ENCODE measurements at regions of chr18 and their contacts with region 1.

Region 1: GRCh38 chr18:62425465-62426195 is 97.2 kb upstream of the ZCCHC2 start:
- DNase-seq: peak; percentile 73 to 77
- H3K4me3 ChIP-seq: peak overlapping the region; percentile 20 to 55 (median 33); a peak in 5 of 8 replicates
- H3K27ac ChIP-seq: no peak overlapping the region
- H3K4me1 ChIP-seq: peaks cover 0 to 8% (median 5%) of the 10 kb centered on the region in 4 experiments; a peak in 5 of 7 replicates
- H3K27me3 ChIP-seq: no peaks in the 10 kb centered on the region
- CTCF ChIP-seq: peak; percentile 29 to 89 (median 88)
- EP300 ChIP-seq: no peak
- POLR2A ChIP-seq: no peak
- RAD21 ChIP-seq: peak; percentile 78 to 85

Region 2: DNA sequence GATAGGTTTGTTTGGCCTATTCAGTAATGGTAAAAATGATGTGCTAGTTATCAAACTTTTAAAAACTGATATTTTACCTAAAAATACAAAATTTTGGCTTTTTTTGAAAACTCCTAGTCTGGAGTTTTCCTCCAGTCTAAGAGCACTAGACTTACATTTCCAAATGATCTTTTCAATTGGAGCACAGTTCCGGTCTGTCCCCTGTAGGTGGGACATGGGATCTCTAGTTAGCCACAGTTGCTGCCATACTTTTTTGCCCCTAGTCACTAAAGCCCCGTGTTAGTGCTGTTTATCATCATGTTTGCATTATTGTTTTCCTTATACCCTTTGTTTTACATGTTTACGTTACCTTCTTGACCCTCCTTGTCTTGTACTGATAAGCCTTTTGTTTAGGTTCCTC is 186.2 kb before region 1 on chr18:
- CTCF ChIA-PET with region 1: no interaction called
- POLR2A ChIA-PET with region 1: no interaction called
- DNase-seq: no peak
- H3K4me3 ChIP-seq: no peak overlapping the region
- H3K27ac ChIP-seq: no peak overlapping the region
- H3K4me1 ChIP-seq: no peaks in the 10 kb centered on the region
- H3K27me3 ChIP-seq: no peaks in the 10 kb centered on the region
- CTCF ChIP-seq: peak in 2 of 3 experiments; percentile 9 to 36; a peak in 1 of 4 replicates
- EP300 ChIP-seq: no peak
- POLR2A ChIP-seq: no peak
- RAD21 ChIP-seq: no peak

Region 3: GRCh38 chr18:62399781-62400308 is 25.8 kb before region 1 on chr18:
- CTCF ChIA-PET with region 1: interaction called, 11 read pairs
- POLR2A ChIA-PET with region 1: no interaction called
- DNase-seq: no peak
- H3K4me3 ChIP-seq: no peak overlapping the region
- H3K27ac ChIP-seq: no peak overlapping the region
- H3K4me1 ChIP-seq: peaks cover 3 to 6% (median 4%) of the 10 kb centered on the region in 4 experiments; a peak in 4 of 7 replicates
- H3K27me3 ChIP-seq: no peaks in the 10 kb centered on the region
- CTCF ChIP-seq: peak; percentile 43 to 67 (median 55)
- EP300 ChIP-seq: no peak
- POLR2A ChIP-seq: no peak
- RAD21 ChIP-seq: peak; percentile 41 to 57; a peak in 3 of 4 replicates

Region 4: DNA sequence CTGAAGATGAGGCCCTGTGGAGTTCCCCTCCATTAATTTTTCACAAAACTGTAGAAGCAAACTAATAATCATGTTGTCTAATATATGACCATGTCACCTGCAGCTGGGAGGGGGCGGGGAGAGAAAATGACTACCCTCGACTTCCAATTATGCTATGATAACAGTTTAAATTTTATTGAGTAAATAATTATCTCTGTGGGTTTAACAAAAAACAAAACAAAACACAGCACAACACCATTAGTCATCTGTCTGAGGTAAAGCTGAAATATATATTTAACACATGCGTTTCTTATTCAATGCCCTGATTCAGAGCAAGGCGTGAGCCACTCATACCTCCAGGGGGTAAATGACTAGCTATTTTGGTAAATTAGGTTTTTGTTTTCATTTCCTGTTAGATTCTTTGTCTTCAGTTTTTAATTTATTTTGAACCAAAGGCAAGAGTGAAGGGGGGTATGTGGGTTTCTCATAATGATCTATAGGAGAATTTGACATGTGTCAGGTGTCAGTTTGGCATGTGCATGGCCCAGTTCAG is 19.8 kb after region 1 on chr18:
- CTCF ChIA-PET with region 1: interaction called, 10 read pairs
- POLR2A ChIA-PET with region 1: interaction called, 4 read pairs
- DNase-seq: no peak
- H3K4me3 ChIP-seq: no peak overlapping the region
- H3K27ac ChIP-seq: no peak overlapping the region
- H3K4me1 ChIP-seq: peaks cover 0 to 3% (median 0%) of the 10 kb centered on the region in 4 experiments; a peak in 1 of 7 replicates
- H3K27me3 ChIP-seq: no peaks in the 10 kb centered on the region; a peak in 1 of 7 replicates
- CTCF ChIP-seq: no peak
- EP300 ChIP-seq: no peak
- POLR2A ChIP-seq: no peak
- RAD21 ChIP-seq: no peak

Region 5: DNA sequence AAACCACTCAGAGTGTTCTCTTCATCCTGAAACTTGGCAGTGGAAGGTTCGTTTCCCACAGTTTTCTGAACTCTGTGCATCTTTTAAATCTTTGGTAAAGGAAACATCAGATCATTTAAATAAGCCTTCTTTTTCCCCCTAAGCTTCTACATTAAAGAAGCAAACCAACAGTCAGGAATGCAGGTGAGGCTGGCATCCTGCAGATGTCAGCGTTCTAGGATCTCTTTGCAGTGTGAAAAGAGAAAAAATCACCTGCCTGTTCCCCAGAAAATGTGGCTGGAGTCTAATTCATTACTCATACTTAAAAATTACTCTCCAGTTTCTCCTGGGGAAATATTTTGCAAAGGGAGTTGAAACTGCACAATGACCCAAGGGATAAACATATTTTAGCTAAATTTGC is 32.7 kb after region 1 on chr18:
- CTCF ChIA-PET with region 1: interaction called, 10 read pairs
- POLR2A ChIA-PET with region 1: no interaction called
- DNase-seq: no peak
- H3K4me3 ChIP-seq: no peak overlapping the region
- H3K27ac ChIP-seq: no peak overlapping the region
- H3K4me1 ChIP-seq: peaks cover 0 to 3% (median 0%) of the 10 kb centered on the region in 4 experiments; a peak in 1 of 7 replicates
- H3K27me3 ChIP-seq: no peaks in the 10 kb centered on the region
- CTCF ChIP-seq: peak in 2 of 3 experiments; percentile 18 to 37; a peak in 2 of 4 replicates
- EP300 ChIP-seq: no peak
- POLR2A ChIP-seq: no peak
- RAD21 ChIP-seq: peak in 1 of 2 experiments; percentile 28; a peak in 1 of 4 replicates

Region 6: DNA sequence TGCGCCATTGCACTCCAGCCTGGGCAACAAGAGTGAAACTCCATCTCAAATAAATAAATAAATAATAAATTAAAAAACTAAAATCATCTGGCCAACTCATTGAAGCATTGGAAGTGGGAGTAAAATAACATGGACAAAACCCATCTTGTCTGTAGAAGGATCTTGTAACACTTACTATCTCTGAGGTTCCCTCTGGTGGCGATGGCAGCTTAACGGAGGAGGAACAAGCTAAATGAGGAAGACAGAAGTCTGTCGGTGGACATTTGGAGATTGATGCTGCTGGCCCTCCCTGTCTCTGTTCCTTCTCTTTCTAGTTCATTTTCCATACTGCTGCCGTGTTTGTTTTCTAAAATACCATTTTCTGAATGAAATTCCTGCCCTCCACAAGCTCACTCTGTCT is 140.6 kb after region 1 on chr18:
- CTCF ChIA-PET with region 1: interaction called, 16 read pairs
- POLR2A ChIA-PET with region 1: no interaction called
- DNase-seq: peak in 1 of 2 experiments; percentile 5
- H3K4me3 ChIP-seq: no peak overlapping the region
- H3K27ac ChIP-seq: no peak overlapping the region
- H3K4me1 ChIP-seq: no peaks in the 10 kb centered on the region
- H3K27me3 ChIP-seq: no peaks in the 10 kb centered on the region
- CTCF ChIP-seq: peak in 2 of 3 experiments; percentile 49 to 53; a peak in 3 of 4 replicates
- EP300 ChIP-seq: no peak
- POLR2A ChIP-seq: no peak
- RAD21 ChIP-seq: peak; percentile 44 to 58

Region 7: GRCh38 chr18:62571648-62572047 is 146.0 kb after region 1 on chr18:
- CTCF ChIA-PET with region 1: interaction called, 16 read pairs
- POLR2A ChIA-PET with region 1: no interaction called
- DNase-seq: no peak
- H3K4me3 ChIP-seq: no peak overlapping the region
- H3K27ac ChIP-seq: no peak overlapping the region
- H3K4me1 ChIP-seq: no peaks in the 10 kb centered on the region
- H3K27me3 ChIP-seq: no peaks in the 10 kb centered on the region
- CTCF ChIP-seq: no peak
- EP300 ChIP-seq: no peak
- POLR2A ChIP-seq: no peak
- RAD21 ChIP-seq: no peak

Measured in H1 (cell line).